Adrenal gland (tissue), 19 donors: ENCODE measurements at regions of chr18 and their contacts with region 1.

Region 1: GRCh38 chr18:4639628-4640310 is 184.7 kb upstream of the DLGAP1 start:
- DNase-seq: no peak
- H3K4me3 ChIP-seq: no peak overlapping the region
- H3K27ac ChIP-seq: no peak overlapping the region
- H3K4me1 ChIP-seq: no peaks in the 10 kb centered on the region
- H3K27me3 ChIP-seq: no peaks in the 10 kb centered on the region
- CTCF ChIP-seq: no peak
- POLR2A ChIP-seq: no peak

Region 2: DNA sequence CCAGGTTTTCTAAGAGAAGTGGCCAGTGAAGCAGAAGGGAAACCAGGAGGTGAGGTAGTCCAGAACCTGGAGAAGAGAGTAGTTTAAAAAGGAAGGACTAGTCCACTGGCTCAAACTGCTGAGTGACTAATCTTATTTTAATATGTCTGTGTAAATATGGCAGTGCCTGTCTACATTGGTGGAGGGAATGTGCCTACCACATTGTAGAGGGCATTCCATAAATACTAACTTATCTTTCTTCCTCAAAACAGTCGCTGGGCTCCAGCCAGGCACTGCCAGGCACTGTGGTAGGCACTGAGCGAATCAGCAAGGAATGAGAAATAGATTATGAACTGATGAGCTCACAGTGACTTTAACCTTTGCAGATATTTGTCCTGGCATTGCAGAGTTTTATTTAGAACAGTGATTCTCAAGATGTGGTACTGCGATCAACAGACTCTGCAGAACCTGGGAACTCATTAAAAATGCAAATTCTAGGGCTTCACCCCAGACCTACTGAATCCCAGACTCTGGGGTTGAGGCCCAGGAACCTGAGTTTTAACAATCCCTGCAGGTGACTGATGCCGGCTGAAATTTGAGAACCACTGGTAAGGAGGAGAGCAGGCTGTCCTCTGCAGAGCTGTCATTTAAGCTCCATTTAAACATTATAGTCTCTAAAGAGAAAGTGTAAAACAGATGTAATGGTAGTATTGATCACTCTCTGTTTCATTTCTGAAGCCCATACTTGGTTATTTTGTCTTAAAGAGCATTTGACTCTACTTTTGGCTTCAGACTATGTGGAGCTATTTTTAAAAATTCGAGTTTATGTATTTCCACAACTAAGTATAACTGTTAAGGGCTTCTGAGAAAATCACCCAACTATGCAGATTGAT is 672.5 kb before region 1 on chr18:
- intact Hi-C with region 1: no loop called
- DNase-seq: peak in 6 of 7 donors; percentile 36 to 86 (median 72)
- H3K4me3 ChIP-seq: no peak overlapping the region
- H3K27ac ChIP-seq: peak overlapping the region in 4 of 5 donors; percentile 0 to 85 (median 63)
- H3K4me1 ChIP-seq: peaks cover 0 to 29% of the 10 kb centered on the region in 2 donors
- H3K27me3 ChIP-seq: no peaks in the 10 kb centered on the region
- CTCF ChIP-seq: no peak
- POLR2A ChIP-seq: no peak

Region 3: GRCh38 chr18:4544134-4544533 is 95.6 kb before region 1 on chr18:
- intact Hi-C with region 1: no loop called
- DNase-seq: no peak
- H3K4me3 ChIP-seq: no peak overlapping the region
- H3K27ac ChIP-seq: no peak overlapping the region
- H3K4me1 ChIP-seq: no peaks in the 10 kb centered on the region
- H3K27me3 ChIP-seq: no peaks in the 10 kb centered on the region
- CTCF ChIP-seq: no peak
- POLR2A ChIP-seq: no peak

Region 4: GRCh38 chr18:4691836-4692235 is 52.1 kb after region 1 on chr18:
- intact Hi-C with region 1: loop called in 1 of 2 experiments (anchors 10 kb)
- DNase-seq: no peak
- H3K4me3 ChIP-seq: no peak overlapping the region
- H3K27ac ChIP-seq: no peak overlapping the region
- H3K4me1 ChIP-seq: no peaks in the 10 kb centered on the region
- H3K27me3 ChIP-seq: no peaks in the 10 kb centered on the region
- CTCF ChIP-seq: no peak
- POLR2A ChIP-seq: no peak

Region 5: DNA sequence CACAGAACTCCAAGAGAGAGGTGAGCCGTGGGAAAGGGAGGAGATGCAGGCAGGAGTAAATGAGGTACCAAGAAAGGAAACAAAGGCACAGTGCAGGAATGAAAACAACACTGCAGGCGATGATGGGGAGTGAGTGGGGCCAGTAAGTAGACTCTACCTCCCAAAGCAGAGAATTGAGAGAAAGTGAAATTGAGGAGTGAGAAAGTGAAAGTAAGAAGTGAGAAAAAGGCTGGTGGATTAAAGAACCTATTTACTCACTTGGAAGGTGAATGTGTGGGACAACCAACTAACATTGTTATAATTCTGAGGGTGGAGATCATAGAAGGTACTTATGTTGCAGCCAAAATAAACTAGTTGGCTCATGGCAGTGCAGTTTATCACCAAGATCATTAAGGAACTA is 1448.7 kb after region 1 on chr18:
- intact Hi-C with region 1: no loop called
- DNase-seq: no peak
- H3K4me3 ChIP-seq: peak overlapping the region in 1 of 4 donors; percentile 11
- H3K27ac ChIP-seq: no peak overlapping the region
- H3K4me1 ChIP-seq: peaks cover 0 to 9% of the 10 kb centered on the region in 2 donors
- H3K27me3 ChIP-seq: no peaks in the 10 kb centered on the region
- CTCF ChIP-seq: no peak
- POLR2A ChIP-seq: no peak